ENCODE measurements at regions of chr12 and their contacts with region 1.

Region 1: DNA sequence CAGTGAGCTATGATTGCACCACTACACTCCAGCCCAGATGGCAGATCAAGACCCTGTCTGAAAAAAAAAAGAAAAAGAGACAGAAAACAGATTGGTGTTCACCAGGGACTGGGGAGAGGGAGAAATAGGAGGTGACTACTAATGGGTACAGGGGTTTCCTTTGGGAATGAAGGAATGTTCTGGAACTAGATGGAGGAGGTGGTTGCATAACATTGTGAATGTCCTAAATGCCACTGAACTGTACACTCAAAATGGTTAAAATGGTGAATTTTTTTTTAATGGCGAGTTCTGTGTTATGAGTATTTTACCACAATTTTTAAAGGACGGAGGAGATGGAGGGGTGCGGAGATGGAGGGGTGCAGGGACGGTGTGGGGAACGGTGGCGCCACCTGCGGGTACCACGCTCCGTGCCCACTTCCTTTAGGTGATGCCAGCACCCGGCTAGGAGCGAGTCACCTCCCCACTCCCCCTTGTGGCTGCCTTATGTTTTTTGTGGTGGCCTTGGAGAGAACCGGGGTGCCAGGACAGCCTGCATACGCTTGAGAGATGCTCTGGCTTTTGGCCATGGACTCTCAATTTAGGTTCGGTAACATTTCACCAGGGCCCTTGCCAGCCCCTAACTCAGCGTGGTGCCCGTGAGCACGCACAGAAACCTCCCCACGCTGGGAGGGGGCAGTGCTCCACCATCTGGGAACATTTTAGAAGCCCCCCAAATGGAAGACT is 16.1 kb downstream of the UBC start:
- DNase-seq: peak in 4 of 5 donors; percentile 33 to 75 (median 58)
- H3K4me3 ChIP-seq: no peak overlapping the region
- H3K27ac ChIP-seq: peak overlapping the region in 1 of 2 donors; percentile 24
- H3K4me1 ChIP-seq: peaks cover 6% of the 10 kb centered on the region
- H3K27me3 ChIP-seq: no peaks in the 10 kb centered on the region
- CTCF ChIP-seq: peak; percentile 17 to 21 (median 19)
- EP300 ChIP-seq: no peak
- POLR2A ChIP-seq: no peak

Region 2: GRCh38 chr12:124837958-124838803 is 60.2 kb before region 1 on chr12:
- intact Hi-C with region 1: loop called in 1 of 4 experiments (anchors 10 kb)
- DNase-seq: peak; percentile 87 to 93 (median 90)
- H3K4me3 ChIP-seq: no peak overlapping the region
- H3K27ac ChIP-seq: peak overlapping the region; percentile 80
- H3K4me1 ChIP-seq: peaks cover 38% of the 10 kb centered on the region
- H3K27me3 ChIP-seq: no peaks in the 10 kb centered on the region
- CTCF ChIP-seq: no peak
- EP300 ChIP-seq: no peak
- POLR2A ChIP-seq: no peak